Activated CD4-positive, alpha-beta T cell treated with anti-CD3 and anti-CD28 coated beads, Interleukin-2, amount 10 ng/mL, durations not matched to agents 24 days and 14 days (primary cell): ENCODE measurements at regions of chr21 and their contacts with region 1.

Region 1: GRCh38 chr21:42513985-42514882 is 582 bp downstream of the SLC37A1 start:
- DNase-seq: peak; percentile 90
- H3K4me3 Mint-ChIP-seq: peak overlapping the region; percentile 78
- H3K27ac Mint-ChIP-seq: peak overlapping the region; percentile 10
- H3K4me1 Mint-ChIP-seq: peaks cover 20% of the 10 kb centered on the region
- H3K27me3 Mint-ChIP-seq: peaks cover 14% of the 10 kb centered on the region

Region 2: GRCh38 chr21:42467140-42467983 is 46.9 kb before region 1 on chr21:
- intact Hi-C with region 1: loop called (anchors 5 kb)
- DNase-seq: peak; percentile 75
- H3K4me3 Mint-ChIP-seq: no peak overlapping the region
- H3K27ac Mint-ChIP-seq: no peak overlapping the region
- H3K4me1 Mint-ChIP-seq: peaks cover 42% of the 10 kb centered on the region
- H3K27me3 Mint-ChIP-seq: peaks cover 5% of the 10 kb centered on the region

Region 3: GRCh38 chr21:42496122-42496900 is 17.9 kb before region 1 on chr21 and contains the start of gene RSPH1:
- intact Hi-C with region 1: loop called (anchors 1 kb)
- DNase-seq: peak; percentile 100
- H3K4me3 Mint-ChIP-seq: peak within 1 kb of the TSS; percentile 88
- H3K27ac Mint-ChIP-seq: peak within 1 kb of the TSS; percentile 88
- H3K4me1 Mint-ChIP-seq: peaks cover 21% of the 10 kb centered on the region
- H3K27me3 Mint-ChIP-seq: peaks cover 18% of the 10 kb centered on the region
- total RNA-seq, gene RSPH1: not detected in 2 replicates